Natural killer cell (primary cell): ENCODE measurements at regions of chr12 and their contacts with region 1.

Region 1: DNA sequence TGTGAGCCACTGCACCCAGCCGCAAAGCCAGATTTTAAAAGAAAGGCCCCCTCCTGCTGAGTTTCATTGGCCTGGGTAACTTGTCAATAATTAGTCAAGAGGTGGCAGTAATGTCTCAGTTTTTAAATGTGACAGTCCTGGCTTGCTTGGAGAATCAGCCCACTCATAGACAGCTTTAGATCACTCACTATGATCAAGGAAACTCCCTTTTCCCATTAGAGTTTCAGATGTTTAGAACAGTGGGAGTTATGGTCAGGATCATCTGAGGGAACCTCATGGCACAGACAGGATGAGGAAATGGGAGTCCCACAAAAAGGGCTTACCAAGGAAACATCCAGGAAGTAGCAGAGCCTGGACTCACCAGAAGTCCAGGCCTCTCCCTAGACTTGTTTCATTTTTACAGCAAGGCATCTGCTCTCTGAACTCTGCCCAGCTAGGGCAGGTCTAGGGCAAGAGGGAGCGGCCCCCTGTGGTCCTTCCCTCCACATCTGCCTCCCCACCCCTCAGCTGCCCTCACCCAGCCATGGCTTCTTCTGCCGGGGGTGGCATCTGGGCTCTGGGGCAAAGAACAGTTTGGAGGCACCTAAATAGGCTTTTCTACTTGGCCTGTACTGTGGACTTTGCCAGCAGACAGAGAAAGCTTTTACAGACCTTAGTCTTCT is 11.2 kb downstream of the BCL2L14 start:
- DNase-seq: peak in 1 of 2 donors; percentile 40
- ATAC-seq: peak in 1 of 3 donors; percentile 39
- H3K4me3 ChIP-seq: no peak overlapping the region
- H3K4me3 Mint-ChIP-seq: no peak overlapping the region
- H3K27ac ChIP-seq: no peak overlapping the region
- H3K27ac Mint-ChIP-seq: no peak overlapping the region
- H3K4me1 ChIP-seq: no peaks in the 10 kb centered on the region
- H3K4me1 Mint-ChIP-seq: no peaks in the 10 kb centered on the region
- H3K27me3 ChIP-seq: no peaks in the 10 kb centered on the region
- H3K27me3 Mint-ChIP-seq: peaks cover 6 to 15% of the 10 kb centered on the region in 2 donors
- CTCF ChIP-seq: no peak

Region 2: DNA sequence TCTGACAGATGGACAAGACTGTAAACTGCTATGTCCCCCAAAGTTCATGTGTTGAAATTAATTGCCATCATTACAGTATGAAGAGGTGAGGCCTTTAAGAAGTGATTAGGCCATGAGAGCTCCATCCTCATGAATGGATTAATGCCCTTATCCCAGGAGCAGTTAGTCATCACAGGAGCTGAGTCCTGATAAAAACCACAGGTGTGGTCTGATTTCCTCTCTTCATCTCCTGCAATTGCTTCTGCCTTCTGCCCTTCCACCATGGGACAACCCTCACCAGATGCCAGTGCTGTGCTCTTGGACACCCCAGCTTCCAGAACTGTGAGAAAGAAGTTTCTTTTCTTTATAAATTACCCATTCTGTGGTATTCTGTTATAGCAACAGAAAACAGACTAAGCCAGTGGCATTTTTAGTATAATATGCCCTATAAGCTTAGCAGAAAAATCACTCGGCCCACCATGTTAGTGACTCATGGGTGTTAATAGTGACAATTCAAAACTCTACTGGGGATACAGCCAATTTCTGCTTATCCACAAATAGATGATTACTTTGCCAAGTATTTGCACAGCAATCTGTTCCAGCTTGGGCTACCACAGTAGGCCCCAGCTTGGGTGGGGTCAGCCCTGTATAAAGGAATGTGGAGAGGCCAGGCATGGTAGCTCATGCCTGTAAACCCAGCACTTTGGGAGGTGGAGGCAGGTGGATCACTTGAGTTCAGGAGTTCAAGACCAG is 140.2 kb before region 1 on chr12:
- intact Hi-C with region 1: no loop called
- DNase-seq: no peak
- ATAC-seq: no peak
- H3K4me3 ChIP-seq: no peak overlapping the region
- H3K4me3 Mint-ChIP-seq: no peak overlapping the region
- H3K27ac ChIP-seq: no peak overlapping the region
- H3K27ac Mint-ChIP-seq: no peak overlapping the region
- H3K4me1 ChIP-seq: no peaks in the 10 kb centered on the region
- H3K4me1 Mint-ChIP-seq: peaks cover 0 to 4% of the 10 kb centered on the region in 2 donors
- H3K27me3 ChIP-seq: no peaks in the 10 kb centered on the region
- H3K27me3 Mint-ChIP-seq: peaks cover 10 to 22% of the 10 kb centered on the region in 2 donors
- CTCF ChIP-seq: no peak

Region 3: GRCh38 chr12:12334367-12335040 is 252.5 kb after region 1 on chr12:
- intact Hi-C with region 1: loop called (anchors 10 kb)
- DNase-seq: peak; percentile 51 to 82
- ATAC-seq: peak; percentile 87 to 93 (median 91)
- H3K4me3 ChIP-seq: no peak overlapping the region
- H3K4me3 Mint-ChIP-seq: no peak overlapping the region
- H3K27ac ChIP-seq: no peak overlapping the region
- H3K27ac Mint-ChIP-seq: no peak overlapping the region
- H3K4me1 ChIP-seq: peaks cover 11% of the 10 kb centered on the region
- H3K4me1 Mint-ChIP-seq: peaks cover 20 to 29% of the 10 kb centered on the region in 2 donors
- H3K27me3 ChIP-seq: no peaks in the 10 kb centered on the region
- H3K27me3 Mint-ChIP-seq: peaks cover 24 to 27% of the 10 kb centered on the region in 2 donors
- CTCF ChIP-seq: peak; percentile 97